ENCODE measurements at regions of chr9 and their contacts with region 1.

Region 1: GRCh38 chr9:125189361-125190289 is at the start of gene PPP6C:
- DNase-seq: peak; percentile 98
- ATAC-seq: peak; percentile 98
- H3K4me3 ChIP-seq: peak within 1 kb of the TSS; percentile 89 to 99 (median 99)
- H3K4me3 Mint-ChIP-seq: peak within 1 kb of the TSS; percentile 97
- H3K27ac ChIP-seq: peak within 1 kb of the TSS; percentile 91 to 98
- H3K27ac Mint-ChIP-seq: peak within 1 kb of the TSS; percentile 96
- H3K4me1 ChIP-seq: peaks cover 19 to 27% of the 10 kb centered on the region in 2 donors
- H3K4me1 Mint-ChIP-seq: peaks cover 39% of the 10 kb centered on the region
- H3K27me3 ChIP-seq: no peaks in the 10 kb centered on the region
- H3K27me3 Mint-ChIP-seq: no peaks in the 10 kb centered on the region
- CTCF ChIP-seq: peak; percentile 78
- total RNA-seq, gene PPP6C: 36.1 and 38.6 TPM in 2 replicates

Region 2: GRCh38 chr9:124590889-124591641 is 598.6 kb before region 1 on chr9:
- CTCF ChIA-PET with region 1: no interaction called
- POLR2A ChIA-PET with region 1: no interaction called
- intact Hi-C with region 1: no loop called
- DNase-seq: no peak
- ATAC-seq: no peak
- H3K4me3 ChIP-seq: no peak overlapping the region
- H3K4me3 Mint-ChIP-seq: no peak overlapping the region
- H3K27ac ChIP-seq: no peak overlapping the region
- H3K27ac Mint-ChIP-seq: no peak overlapping the region
- H3K4me1 ChIP-seq: no peaks in the 10 kb centered on the region
- H3K4me1 Mint-ChIP-seq: no peaks in the 10 kb centered on the region
- H3K27me3 ChIP-seq: peaks cover 0 to 3% (median 0%) of the 10 kb centered on the region in 4 experiments
- H3K27me3 Mint-ChIP-seq: peaks cover 4% of the 10 kb centered on the region
- CTCF ChIP-seq: no peak

Region 3: DNA sequence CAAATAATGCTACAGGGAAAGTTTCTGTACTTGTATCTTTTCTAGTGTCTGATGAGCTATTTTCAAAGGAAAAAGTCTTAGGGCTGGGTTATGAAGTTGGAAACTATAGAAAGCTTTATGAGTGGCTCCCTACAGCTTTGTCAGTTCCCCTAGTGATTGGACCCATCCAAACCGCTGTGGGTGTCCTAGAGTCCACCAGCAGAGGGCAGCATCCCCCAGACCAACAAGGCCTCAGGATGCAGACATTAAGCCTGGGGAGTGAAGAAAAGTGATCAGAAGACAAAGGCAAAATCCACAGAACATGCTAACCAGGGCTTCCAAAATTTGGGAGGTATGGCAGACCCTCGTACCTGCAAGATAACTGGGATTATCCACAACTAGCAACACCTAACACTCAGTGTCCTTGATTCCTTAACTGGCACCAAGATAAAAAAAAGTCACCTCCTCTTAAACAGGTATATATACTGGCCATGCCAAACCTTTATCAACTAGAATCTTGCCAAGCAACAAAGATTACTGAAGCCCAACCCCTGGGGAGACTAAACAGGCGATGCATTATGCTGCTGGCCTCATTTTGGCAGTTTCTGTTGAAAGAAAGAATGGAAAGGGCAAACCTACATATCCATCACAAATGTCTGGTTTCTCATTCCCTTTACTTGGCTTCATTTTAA is 572.0 kb before region 1 on chr9:
- CTCF ChIA-PET with region 1: no interaction called
- POLR2A ChIA-PET with region 1: no interaction called
- intact Hi-C with region 1: no loop called
- DNase-seq: peak; percentile 76
- ATAC-seq: peak; percentile 61
- H3K4me3 ChIP-seq: no peak overlapping the region
- H3K4me3 Mint-ChIP-seq: no peak overlapping the region
- H3K27ac ChIP-seq: no peak overlapping the region
- H3K27ac Mint-ChIP-seq: no peak overlapping the region
- H3K4me1 ChIP-seq: no peaks in the 10 kb centered on the region
- H3K4me1 Mint-ChIP-seq: no peaks in the 10 kb centered on the region
- H3K27me3 ChIP-seq: no peaks in the 10 kb centered on the region
- H3K27me3 Mint-ChIP-seq: no peaks in the 10 kb centered on the region
- CTCF ChIP-seq: peak; percentile 84

Region 4: GRCh38 chr9:124697326-124698200 is 492.1 kb before region 1 on chr9:
- CTCF ChIA-PET with region 1: no interaction called
- POLR2A ChIA-PET with region 1: no interaction called
- intact Hi-C with region 1: no loop called
- DNase-seq: no peak
- ATAC-seq: no peak
- H3K4me3 ChIP-seq: no peak overlapping the region
- H3K4me3 Mint-ChIP-seq: no peak overlapping the region
- H3K27ac ChIP-seq: no peak overlapping the region
- H3K27ac Mint-ChIP-seq: no peak overlapping the region
- H3K4me1 ChIP-seq: no peaks in the 10 kb centered on the region
- H3K4me1 Mint-ChIP-seq: no peaks in the 10 kb centered on the region
- H3K27me3 ChIP-seq: no peaks in the 10 kb centered on the region
- H3K27me3 Mint-ChIP-seq: no peaks in the 10 kb centered on the region
- CTCF ChIP-seq: no peak

Region 5: GRCh38 chr9:125200210-125201047 is 10.8 kb after region 1 on chr9 and contains the start of gene RABEPK:
- CTCF ChIA-PET with region 1: interaction called, 3 read pairs
- POLR2A ChIA-PET with region 1: no interaction called
- intact Hi-C with region 1: loop called (anchors 1 kb)
- DNase-seq: peak; percentile 94
- ATAC-seq: peak; percentile 98
- H3K4me3 ChIP-seq: peak within 1 kb of the TSS; percentile 61 to 96 (median 83)
- H3K4me3 Mint-ChIP-seq: peak within 1 kb of the TSS; percentile 96
- H3K27ac ChIP-seq: peak within 1 kb of the TSS; percentile 79 to 93
- H3K27ac Mint-ChIP-seq: peak within 1 kb of the TSS; percentile 95
- H3K4me1 ChIP-seq: peaks cover 10 to 16% of the 10 kb centered on the region in 2 donors
- H3K4me1 Mint-ChIP-seq: peaks cover 15% of the 10 kb centered on the region
- H3K27me3 ChIP-seq: no peaks in the 10 kb centered on the region
- H3K27me3 Mint-ChIP-seq: no peaks in the 10 kb centered on the region
- CTCF ChIP-seq: no peak
- total RNA-seq, gene RABEPK: 9.0 and 11.6 TPM in 2 replicates

Region 6: DNA sequence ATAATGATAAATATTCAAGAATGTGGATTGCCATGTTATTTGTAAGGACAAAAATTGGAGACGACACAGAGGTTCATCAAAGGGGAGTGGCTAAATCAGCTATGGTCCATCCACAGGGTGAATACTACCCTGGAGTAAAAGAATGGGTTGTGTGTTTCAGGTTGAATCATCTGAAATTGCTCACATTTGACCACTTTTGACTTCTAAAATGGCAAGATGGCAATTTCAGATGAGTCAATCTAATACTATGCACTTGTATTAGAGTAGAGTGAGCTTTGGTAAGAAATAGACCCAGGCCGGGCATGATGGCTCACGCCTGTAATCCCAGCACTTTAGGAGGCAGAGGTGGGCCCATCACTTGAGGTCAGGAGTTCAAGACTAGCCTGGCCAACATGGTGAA is 203.8 kb after region 1 on chr9:
- CTCF ChIA-PET with region 1: no interaction called
- POLR2A ChIA-PET with region 1: no interaction called
- intact Hi-C with region 1: no loop called
- DNase-seq: no peak
- ATAC-seq: no peak
- H3K4me3 ChIP-seq: no peak overlapping the region
- H3K4me3 Mint-ChIP-seq: no peak overlapping the region
- H3K27ac ChIP-seq: no peak overlapping the region
- H3K27ac Mint-ChIP-seq: no peak overlapping the region
- H3K4me1 ChIP-seq: no peaks in the 10 kb centered on the region
- H3K4me1 Mint-ChIP-seq: no peaks in the 10 kb centered on the region
- H3K27me3 ChIP-seq: no peaks in the 10 kb centered on the region
- H3K27me3 Mint-ChIP-seq: no peaks in the 10 kb centered on the region
- CTCF ChIP-seq: no peak

Measured in B cell (primary cell).